Caco-2 (cell line): ENCODE measurements at regions of chr1 and their contacts with region 1.

Region 1: GRCh38 chr1:94045465-94046056 is 75.4 kb downstream of the ABCA4 start:
- DNase-seq: peak; percentile 91 to 95
- H3K4me3 ChIP-seq: peak overlapping the region; percentile 12
- H3K4me3 Mint-ChIP-seq: peak overlapping the region; percentile 24
- H3K27ac Mint-ChIP-seq: peak overlapping the region; percentile 68
- H3K4me1 ChIP-seq: peaks cover 9% of the 10 kb centered on the region; the same call in 1 of the 2 replicates
- H3K4me1 Mint-ChIP-seq: peaks cover 7% of the 10 kb centered on the region
- H3K27me3 ChIP-seq: no peaks in the 10 kb centered on the region
- H3K27me3 Mint-ChIP-seq: no peaks in the 10 kb centered on the region
- CTCF ChIP-seq: peak; percentile 40 to 73

Region 2: DNA sequence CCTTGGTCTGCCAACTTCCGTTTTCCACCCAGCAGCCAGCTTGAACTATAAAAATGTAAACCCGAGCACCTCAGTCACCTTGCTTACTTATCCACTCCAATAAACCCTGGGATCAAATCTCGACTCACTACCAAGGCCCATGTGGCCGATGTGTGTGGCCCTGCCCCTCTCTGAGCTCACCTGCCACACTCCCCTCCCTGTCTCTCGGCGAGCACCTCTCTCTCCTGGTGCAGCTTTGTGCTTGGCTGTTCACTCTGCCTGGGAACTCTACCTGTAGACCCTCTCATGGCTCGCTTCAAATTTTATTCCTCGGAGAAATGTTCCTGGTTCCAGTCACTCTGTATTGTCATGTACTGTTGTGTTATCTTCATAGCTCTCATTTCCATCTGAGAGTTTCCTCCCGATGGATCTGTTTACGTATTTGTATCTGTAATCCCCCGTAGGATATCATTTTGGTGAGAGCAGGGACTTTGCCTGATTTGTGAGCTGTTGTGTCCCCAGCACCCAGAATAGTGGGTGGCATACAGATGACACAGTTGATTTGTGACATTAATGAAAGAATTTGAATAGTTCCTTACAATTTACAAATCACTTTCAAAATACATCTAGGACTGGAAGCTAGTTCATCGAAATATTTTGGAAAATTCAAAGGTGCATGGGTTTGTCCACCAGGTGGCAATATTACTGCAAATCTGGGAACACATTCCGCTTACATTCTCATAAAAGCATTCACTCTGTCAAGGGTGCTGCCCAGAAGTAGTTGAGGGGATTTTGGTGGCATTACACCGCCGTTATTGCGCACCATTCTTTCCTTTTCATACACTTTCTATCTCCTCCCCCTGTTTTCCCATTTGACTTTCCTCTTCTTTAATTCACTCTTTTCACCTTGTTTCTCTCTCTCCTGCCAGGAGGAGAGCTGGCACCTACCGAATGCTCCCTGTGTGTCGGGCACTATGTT is 19.9 kb before region 1 on chr1:
- CTCF ChIA-PET with region 1: interaction called, 3 read pairs
- POLR2A ChIA-PET with region 1: no interaction called
- intact Hi-C with region 1: loop called (anchors 1 kb)
- DNase-seq: peak in 1 of 2 experiments; percentile 45
- H3K4me3 ChIP-seq: no peak overlapping the region
- H3K4me3 Mint-ChIP-seq: no peak overlapping the region
- H3K27ac Mint-ChIP-seq: peak overlapping the region; percentile 43
- H3K4me1 ChIP-seq: peaks cover 23% of the 10 kb centered on the region
- H3K4me1 Mint-ChIP-seq: peaks cover 22% of the 10 kb centered on the region
- H3K27me3 ChIP-seq: no peaks in the 10 kb centered on the region
- H3K27me3 Mint-ChIP-seq: no peaks in the 10 kb centered on the region
- CTCF ChIP-seq: peak; percentile 43 to 51

Region 3: GRCh38 chr1:94105957-94106529 is 60.5 kb after region 1 on chr1:
- CTCF ChIA-PET with region 1: no interaction called
- POLR2A ChIA-PET with region 1: no interaction called
- intact Hi-C with region 1: no loop called
- DNase-seq: no peak
- H3K4me3 ChIP-seq: no peak overlapping the region
- H3K4me3 Mint-ChIP-seq: no peak overlapping the region
- H3K27ac Mint-ChIP-seq: peak overlapping the region; percentile 91
- H3K4me1 ChIP-seq: peaks cover 40% of the 10 kb centered on the region
- H3K4me1 Mint-ChIP-seq: peaks cover 23% of the 10 kb centered on the region
- H3K27me3 ChIP-seq: no peaks in the 10 kb centered on the region
- H3K27me3 Mint-ChIP-seq: no peaks in the 10 kb centered on the region
- CTCF ChIP-seq: no peak

Region 4: DNA sequence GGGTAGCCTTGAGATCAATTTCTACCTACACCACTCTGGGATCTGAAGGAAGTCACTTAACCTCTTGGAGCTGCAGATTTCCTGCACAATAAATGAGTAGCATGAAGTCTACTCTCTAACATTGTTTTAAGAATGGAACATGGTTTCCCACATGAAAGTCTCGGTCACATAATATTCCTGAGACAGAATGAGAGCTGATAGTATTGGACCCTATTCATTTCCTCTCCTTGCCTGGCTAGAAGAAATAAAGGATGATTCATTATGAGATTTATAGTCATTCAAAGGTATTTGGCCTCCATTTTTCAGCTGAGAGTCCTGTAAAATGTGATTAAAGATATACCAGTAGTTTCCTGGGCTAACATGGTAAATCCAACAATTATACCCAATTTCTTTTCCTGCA is 135.1 kb after region 1 on chr1:
- CTCF ChIA-PET with region 1: no interaction called
- POLR2A ChIA-PET with region 1: no interaction called
- intact Hi-C with region 1: loop called (anchors 5 kb)
- DNase-seq: no peak
- H3K4me3 ChIP-seq: no peak overlapping the region
- H3K4me3 Mint-ChIP-seq: no peak overlapping the region
- H3K27ac Mint-ChIP-seq: no peak overlapping the region
- H3K4me1 ChIP-seq: no peaks in the 10 kb centered on the region
- H3K4me1 Mint-ChIP-seq: peaks cover 13% of the 10 kb centered on the region
- H3K27me3 ChIP-seq: no peaks in the 10 kb centered on the region
- H3K27me3 Mint-ChIP-seq: no peaks in the 10 kb centered on the region
- CTCF ChIP-seq: no peak

Region 5: GRCh38 chr1:94237291-94238226 is 192.0 kb after region 1 on chr1 and contains the start of gene ARHGAP29:
- CTCF ChIA-PET with region 1: interaction called, 22 read pairs
- POLR2A ChIA-PET with region 1: interaction called, 3 read pairs
- intact Hi-C with region 1: loop called (anchors 1 kb)
- DNase-seq: peak; percentile 88 to 92
- H3K4me3 ChIP-seq: peak within 1 kb of the TSS; percentile 81
- H3K4me3 Mint-ChIP-seq: peak within 1 kb of the TSS; percentile 88
- H3K27ac Mint-ChIP-seq: peak within 1 kb of the TSS; percentile 85
- H3K4me1 ChIP-seq: peaks cover 48% of the 10 kb centered on the region
- H3K4me1 Mint-ChIP-seq: peaks cover 41% of the 10 kb centered on the region
- H3K27me3 ChIP-seq: no peaks in the 10 kb centered on the region
- H3K27me3 Mint-ChIP-seq: no peaks in the 10 kb centered on the region
- CTCF ChIP-seq: no peak
- total RNA-seq, gene ARHGAP29: 30.3 and 31.4 TPM in 2 replicates

Region 6: DNA sequence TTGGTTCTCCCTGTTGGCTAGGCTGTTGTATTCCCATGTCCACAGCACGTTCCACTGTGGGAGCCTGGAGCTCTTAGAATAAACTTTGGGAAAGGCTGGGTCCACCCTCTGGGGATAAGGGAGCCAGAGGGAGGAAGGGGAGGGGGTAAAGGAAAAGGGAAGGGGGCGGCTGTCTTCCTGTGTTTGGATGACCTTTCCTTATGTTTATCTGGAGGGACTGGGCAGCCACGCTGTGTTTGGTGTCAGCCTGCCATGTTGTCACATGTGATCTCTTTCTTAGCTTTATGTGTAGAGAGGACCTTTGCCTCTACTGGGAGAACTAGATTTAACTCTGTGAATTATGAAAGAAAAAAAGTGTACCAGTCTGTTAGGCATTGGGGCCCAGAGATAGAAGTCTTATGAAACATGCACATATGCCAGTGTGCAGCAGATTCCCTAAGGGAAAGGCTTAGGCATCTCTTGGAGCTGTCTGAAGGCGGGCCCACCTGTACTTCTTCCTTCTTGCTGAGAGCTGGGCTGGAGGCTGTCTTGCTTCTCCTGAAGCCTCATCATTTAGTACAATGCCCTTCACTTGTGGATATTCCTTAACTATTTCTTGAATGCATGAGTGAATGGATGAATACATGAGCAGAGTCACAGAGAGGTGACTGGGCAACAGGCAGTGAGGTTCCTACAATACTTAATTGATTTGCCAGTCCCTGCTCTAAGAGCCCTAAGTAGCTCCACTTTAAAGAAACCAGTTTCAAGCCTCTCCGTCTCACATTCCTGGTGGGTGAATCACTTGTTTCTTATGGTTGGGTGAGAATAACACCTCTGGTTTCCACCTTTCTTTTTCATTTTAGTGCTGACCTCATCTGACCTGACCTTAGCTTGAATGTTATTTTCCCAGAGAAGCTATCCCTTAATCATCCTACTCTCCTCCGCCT is 254.3 kb after region 1 on chr1:
- CTCF ChIA-PET with region 1: no interaction called
- POLR2A ChIA-PET with region 1: no interaction called
- intact Hi-C with region 1: no loop called
- DNase-seq: peak in 1 of 2 experiments; percentile 56
- H3K4me3 ChIP-seq: no peak overlapping the region
- H3K4me3 Mint-ChIP-seq: no peak overlapping the region
- H3K27ac Mint-ChIP-seq: peak overlapping the region; percentile 75
- H3K4me1 ChIP-seq: peaks cover 26% of the 10 kb centered on the region
- H3K4me1 Mint-ChIP-seq: peaks cover 11% of the 10 kb centered on the region
- H3K27me3 ChIP-seq: no peaks in the 10 kb centered on the region
- H3K27me3 Mint-ChIP-seq: no peaks in the 10 kb centered on the region
- CTCF ChIP-seq: no peak